ENCODE measurements at regions of chr3 and their contacts with region 1.

Region 1: GRCh38 chr3:187738331-187739093 is 6.8 kb downstream of the BCL6 start:
- DNase-seq: peak; percentile 65 to 78 (median 67)
- H3K4me3 ChIP-seq: peak overlapping the region; percentile 88 to 89
- H3K4me3 Mint-ChIP-seq: peak overlapping the region; percentile 95 to 99 (median 96)
- H3K27ac ChIP-seq: peak overlapping the region; percentile 73
- H3K27ac Mint-ChIP-seq: peak overlapping the region; percentile 77 to 99 (median 94)
- H3K4me1 ChIP-seq: peaks cover 34% of the 10 kb centered on the region
- H3K4me1 Mint-ChIP-seq: peaks cover 22 to 58% (median 36%) of the 10 kb centered on the region in 4 donors
- H3K27me3 ChIP-seq: no peaks in the 10 kb centered on the region
- H3K27me3 Mint-ChIP-seq: no peaks in the 10 kb centered on the region

Region 2: GRCh38 chr3:187802928-187803259 is 64.4 kb after region 1 on chr3:
- CTCF ChIA-PET with region 1: interaction called, 16 read pairs
- POLR2A ChIA-PET with region 1: interaction called, 4 read pairs
- intact Hi-C with region 1: no loop called
- DNase-seq: peak; percentile 38 to 63 (median 48)
- H3K4me3 ChIP-seq: peak overlapping the region; percentile 0 to 9
- H3K4me3 Mint-ChIP-seq: peak overlapping the region; percentile 80 to 89 (median 88)
- H3K27ac ChIP-seq: no peak overlapping the region
- H3K27ac Mint-ChIP-seq: peak overlapping the region in 6 of 7 donors; percentile 39 to 95 (median 90)
- H3K4me1 ChIP-seq: peaks cover 49% of the 10 kb centered on the region
- H3K4me1 Mint-ChIP-seq: peaks cover 40 to 80% (median 52%) of the 10 kb centered on the region in 4 donors
- H3K27me3 ChIP-seq: no peaks in the 10 kb centered on the region
- H3K27me3 Mint-ChIP-seq: no peaks in the 10 kb centered on the region

Region 3: DNA sequence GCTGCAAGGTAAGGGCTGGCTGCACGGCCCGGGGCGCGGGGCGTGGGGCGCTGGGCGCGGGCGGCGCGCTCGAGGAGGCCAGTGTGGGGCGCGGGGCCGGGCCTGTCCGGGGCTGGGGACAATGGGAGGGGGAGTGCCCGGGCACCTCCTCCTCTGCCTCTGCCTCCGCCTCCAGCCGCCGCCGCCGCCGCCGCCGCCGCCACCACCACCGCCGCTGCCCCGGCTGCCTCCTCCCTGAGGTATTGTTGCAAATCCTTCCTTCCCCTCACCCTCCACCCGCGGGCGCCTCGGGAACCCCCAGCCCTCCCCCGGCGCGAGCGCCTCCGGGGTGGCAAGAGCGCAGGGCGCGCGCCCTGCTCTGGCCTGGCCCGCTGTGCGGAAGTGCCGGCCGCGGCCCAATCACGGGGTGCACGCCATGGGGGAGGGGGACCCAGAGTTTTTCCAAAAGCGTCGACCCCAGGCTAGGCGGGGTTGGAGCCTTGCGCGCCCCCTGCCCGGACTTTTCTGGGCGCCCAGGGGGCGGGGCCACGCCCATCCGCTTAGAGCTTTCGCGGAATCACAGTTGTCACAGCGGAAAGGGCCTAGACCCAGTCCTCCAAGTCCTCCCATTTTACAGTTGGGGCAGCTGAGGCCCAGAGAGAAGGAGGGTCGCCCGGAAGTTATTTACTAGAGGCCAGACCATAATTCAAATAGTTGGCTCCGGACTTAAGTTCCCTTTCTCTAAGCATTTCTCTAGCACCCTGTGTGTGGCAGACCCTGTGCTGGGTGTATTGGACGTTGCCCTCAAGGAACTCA is 415.7 kb after region 1 on chr3 and contains the start of gene LPP:
- CTCF ChIA-PET with region 1: interaction called, 20 read pairs
- POLR2A ChIA-PET with region 1: interaction called, 8 read pairs
- intact Hi-C with region 1: no loop called
- DNase-seq: peak; percentile 80 to 94 (median 83)
- H3K4me3 ChIP-seq: peak within 1 kb of the TSS; percentile 67 to 79
- H3K4me3 Mint-ChIP-seq: peak within 1 kb of the TSS; percentile 86 to 96 (median 91)
- H3K27ac ChIP-seq: peak within 1 kb of the TSS; percentile 76
- H3K27ac Mint-ChIP-seq: peak within 1 kb of the TSS; percentile 91 to 96 (median 92)
- H3K4me1 ChIP-seq: peaks cover 53% of the 10 kb centered on the region
- H3K4me1 Mint-ChIP-seq: peaks cover 44 to 72% (median 53%) of the 10 kb centered on the region in 4 donors
- H3K27me3 ChIP-seq: no peaks in the 10 kb centered on the region
- H3K27me3 Mint-ChIP-seq: no peaks in the 10 kb centered on the region
- total RNA-seq, gene LPP: 24.3 to 25.0 TPM

Region 4: GRCh38 chr3:188584162-188584529 is 845.6 kb after region 1 on chr3:
- CTCF ChIA-PET with region 1: interaction called, 5 read pairs
- POLR2A ChIA-PET with region 1: no interaction called
- intact Hi-C with region 1: loop called (anchors 5 kb)
- DNase-seq: no peak
- H3K4me3 ChIP-seq: no peak overlapping the region
- H3K4me3 Mint-ChIP-seq: no peak overlapping the region
- H3K27ac ChIP-seq: no peak overlapping the region
- H3K27ac Mint-ChIP-seq: no peak overlapping the region
- H3K4me1 ChIP-seq: peaks cover 12% of the 10 kb centered on the region
- H3K4me1 Mint-ChIP-seq: peaks cover 4 to 17% (median 7%) of the 10 kb centered on the region in 4 donors
- H3K27me3 ChIP-seq: no peaks in the 10 kb centered on the region
- H3K27me3 Mint-ChIP-seq: no peaks in the 10 kb centered on the region

Region 5: GRCh38 chr3:188830893-188831292 is 1092.4 kb after region 1 on chr3:
- CTCF ChIA-PET with region 1: interaction called, 18 read pairs
- POLR2A ChIA-PET with region 1: interaction called, 5 read pairs
- intact Hi-C with region 1: loop called (anchors 1 kb)
- DNase-seq: no peak
- H3K4me3 ChIP-seq: no peak overlapping the region
- H3K4me3 Mint-ChIP-seq: no peak overlapping the region
- H3K27ac ChIP-seq: no peak overlapping the region
- H3K27ac Mint-ChIP-seq: no peak overlapping the region
- H3K4me1 ChIP-seq: peaks cover 17% of the 10 kb centered on the region
- H3K4me1 Mint-ChIP-seq: peaks cover 13 to 20% (median 19%) of the 10 kb centered on the region in 4 donors
- H3K27me3 ChIP-seq: no peaks in the 10 kb centered on the region
- H3K27me3 Mint-ChIP-seq: no peaks in the 10 kb centered on the region

Region 6: GRCh38 chr3:189049438-189050236 is 1311.1 kb after region 1 on chr3:
- CTCF ChIA-PET with region 1: interaction called, 216 read pairs
- POLR2A ChIA-PET with region 1: interaction called, 10 read pairs
- intact Hi-C with region 1: loop called (anchors 2 kb)
- DNase-seq: peak; percentile 22 to 51 (median 36)
- H3K4me3 ChIP-seq: no peak overlapping the region
- H3K4me3 Mint-ChIP-seq: peak overlapping the region; percentile 26 to 80 (median 69)
- H3K27ac ChIP-seq: no peak overlapping the region
- H3K27ac Mint-ChIP-seq: peak overlapping the region; percentile 33 to 95 (median 88)
- H3K4me1 ChIP-seq: peaks cover 20% of the 10 kb centered on the region
- H3K4me1 Mint-ChIP-seq: peaks cover 13 to 29% (median 20%) of the 10 kb centered on the region in 4 donors
- H3K27me3 ChIP-seq: no peaks in the 10 kb centered on the region
- H3K27me3 Mint-ChIP-seq: peaks cover 0 to 3% of the 10 kb centered on the region in 2 donors

Region 7: DNA sequence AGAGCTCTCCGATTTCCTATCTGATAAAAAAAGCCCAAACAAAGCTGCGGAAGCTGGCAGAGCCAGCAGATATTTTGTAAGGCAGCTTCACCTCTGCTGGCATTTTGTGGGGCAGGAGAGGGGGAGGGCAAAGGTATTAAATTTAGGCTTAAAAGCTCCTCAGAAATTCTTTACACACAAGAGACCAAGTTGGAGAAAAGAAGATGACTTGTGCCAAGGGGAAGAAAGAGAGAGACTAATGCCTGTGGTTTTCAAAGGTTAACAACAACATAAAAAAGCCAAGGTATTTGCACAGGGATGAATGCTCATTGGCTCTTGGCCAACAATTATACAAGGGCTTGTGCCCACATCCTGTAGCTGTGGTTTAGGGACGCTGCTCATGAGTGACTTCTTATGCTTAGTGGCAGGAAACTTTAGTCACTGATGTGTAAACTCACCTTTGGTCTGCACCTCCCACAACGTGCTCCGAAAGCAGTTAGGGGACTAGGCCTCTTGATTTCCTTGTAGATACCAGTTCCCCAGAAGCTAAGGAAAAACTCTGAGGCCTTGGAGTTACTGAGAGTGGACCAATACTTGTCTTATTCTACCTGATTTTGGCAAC is 1586.1 kb after region 1 on chr3:
- CTCF ChIA-PET with region 1: interaction called, 6 read pairs
- POLR2A ChIA-PET with region 1: interaction called, 4 read pairs
- intact Hi-C with region 1: loop called (anchors 2 kb)
- DNase-seq: peak; percentile 89 to 94 (median 93)
- H3K4me3 ChIP-seq: peak overlapping the region in 1 of 2 donors; percentile 6
- H3K4me3 Mint-ChIP-seq: peak overlapping the region; percentile 75 to 90 (median 84)
- H3K27ac ChIP-seq: peak overlapping the region; percentile 31
- H3K27ac Mint-ChIP-seq: peak overlapping the region; percentile 91 to 97 (median 96)
- H3K4me1 ChIP-seq: peaks cover 59% of the 10 kb centered on the region
- H3K4me1 Mint-ChIP-seq: peaks cover 43 to 66% (median 48%) of the 10 kb centered on the region in 4 donors
- H3K27me3 ChIP-seq: no peaks in the 10 kb centered on the region
- H3K27me3 Mint-ChIP-seq: no peaks in the 10 kb centered on the region